Heart right ventricle (tissue), 16 donors: ENCODE measurements at regions of chrX and their contacts with region 1.

Region 1: GRCh38 chrX:40013266-40014195 is 84.2 kb downstream of the BCOR start:
- DNase-seq: peak; percentile 74 to 75
- ATAC-seq: peak; percentile 49 to 78 (median 74)
- H3K4me3 ChIP-seq: peak overlapping the region; percentile 16 to 65 (median 56)
- H3K27ac ChIP-seq: peak overlapping the region; percentile 89 to 98 (median 95)
- H3K4me1 ChIP-seq: peaks cover 0 to 54% (median 26%) of the 10 kb centered on the region in 9 donors
- H3K27me3 ChIP-seq: peaks cover 0 to 78% (median 0%) of the 10 kb centered on the region in 7 donors
- CTCF ChIP-seq: no peak

Region 2: GRCh38 chrX:39814391-39814790 is 199.1 kb before region 1 on chrX:
- intact Hi-C with region 1: loop called in 3 of 10 experiments (anchors 10 kb)
- DNase-seq: no peak
- ATAC-seq: peak in 5 of 8 donors; percentile 38 to 57 (median 41)
- H3K4me3 ChIP-seq: no peak overlapping the region
- H3K27ac ChIP-seq: peak overlapping the region in 7 of 10 donors; percentile 22 to 68 (median 39)
- H3K4me1 ChIP-seq: peaks cover 0 to 17% (median 10%) of the 10 kb centered on the region in 9 donors
- H3K27me3 ChIP-seq: peaks cover 0 to 30% (median 0%) of the 10 kb centered on the region in 7 donors
- CTCF ChIP-seq: peak; percentile 18 to 60 (median 51)

Region 3: DNA sequence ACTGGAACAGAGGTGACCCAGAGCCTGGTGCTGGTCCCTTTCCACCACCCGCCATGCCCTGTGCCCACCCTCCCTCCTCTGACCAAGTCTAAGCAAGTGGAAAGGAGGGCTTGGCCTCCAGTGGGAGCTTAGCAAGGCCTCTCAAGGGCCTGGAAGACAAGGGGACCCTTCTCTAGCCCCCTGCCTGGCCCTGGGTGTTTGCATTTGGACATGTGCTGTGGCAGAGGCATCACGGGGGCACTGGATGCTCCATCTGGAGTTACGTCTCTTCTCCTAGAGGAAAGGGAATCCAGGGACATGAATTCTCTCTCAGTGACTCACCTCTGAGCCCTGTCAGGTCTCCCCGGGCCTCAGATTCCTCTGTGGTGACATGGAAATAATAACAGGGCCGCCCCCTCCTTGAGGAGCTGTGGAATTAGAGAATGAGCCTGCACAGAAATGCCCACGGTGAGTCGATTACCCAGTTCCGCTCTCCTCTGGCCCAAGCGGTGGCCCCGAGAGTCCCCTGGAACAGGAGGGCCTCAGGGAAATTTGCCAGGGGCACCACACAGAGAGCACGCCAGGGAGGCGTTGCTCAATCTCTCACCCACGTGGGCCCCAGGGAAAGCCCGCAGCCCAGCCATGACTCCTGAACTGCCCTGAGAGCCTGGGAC is 105.4 kb before region 1 on chrX:
- intact Hi-C with region 1: loop called in 3 of 10 experiments (anchors 10 kb)
- DNase-seq: peak; percentile 44 to 54
- ATAC-seq: peak; percentile 80 to 94 (median 88)
- H3K4me3 ChIP-seq: no peak overlapping the region
- H3K27ac ChIP-seq: peak overlapping the region in 8 of 10 donors; percentile 25 to 70 (median 34)
- H3K4me1 ChIP-seq: peaks cover 0 to 37% (median 5%) of the 10 kb centered on the region in 9 donors
- H3K27me3 ChIP-seq: peaks cover 0 to 20% (median 0%) of the 10 kb centered on the region in 7 donors
- CTCF ChIP-seq: no peak

Region 4: GRCh38 chrX:39972340-39972739 is 41.2 kb before region 1 on chrX:
- intact Hi-C with region 1: loop called in 1 of 10 experiments (anchors 5 kb)
- DNase-seq: peak in 1 of 2 donors; percentile 13
- ATAC-seq: peak in 5 of 8 donors; percentile 27 to 52 (median 38)
- H3K4me3 ChIP-seq: no peak overlapping the region
- H3K27ac ChIP-seq: peak overlapping the region in 4 of 10 donors; percentile 28 to 62 (median 45)
- H3K4me1 ChIP-seq: peaks cover 0 to 10% (median 0%) of the 10 kb centered on the region in 9 donors
- H3K27me3 ChIP-seq: peaks cover 0 to 26% (median 0%) of the 10 kb centered on the region in 7 donors
- CTCF ChIP-seq: no peak

Region 5: GRCh38 chrX:40108959-40109287 is 95.4 kb after region 1 on chrX:
- intact Hi-C with region 1: loop called in 3 of 10 experiments (anchors 2 to 10 kb)
- DNase-seq: peak; percentile 74 to 84
- ATAC-seq: peak; percentile 60 to 82 (median 68)
- H3K4me3 ChIP-seq: peak overlapping the region; percentile 28 to 75 (median 59)
- H3K27ac ChIP-seq: peak overlapping the region; percentile 84 to 96 (median 93)
- H3K4me1 ChIP-seq: peaks cover 2 to 44% (median 34%) of the 10 kb centered on the region in 9 donors
- H3K27me3 ChIP-seq: peaks cover 0 to 73% (median 0%) of the 10 kb centered on the region in 7 donors
- CTCF ChIP-seq: no peak

Region 6: GRCh38 chrX:40153335-40154249 is 140.1 kb after region 1 on chrX:
- intact Hi-C with region 1: loop called in 6 of 10 experiments (anchors 5 to 10 kb)
- DNase-seq: no peak
- ATAC-seq: peak; percentile 2 to 39 (median 28)
- H3K4me3 ChIP-seq: peak overlapping the region; percentile 32 to 56 (median 53)
- H3K27ac ChIP-seq: peak overlapping the region; percentile 21 to 89 (median 82)
- H3K4me1 ChIP-seq: peaks cover 6 to 66% (median 45%) of the 10 kb centered on the region in 9 donors
- H3K27me3 ChIP-seq: peaks cover 0 to 100% (median 0%) of the 10 kb centered on the region in 7 donors
- CTCF ChIP-seq: peak in 4 of 9 donors; percentile 6 to 41 (median 16)

Region 7: GRCh38 chrX:40266490-40267333 is 253.2 kb after region 1 on chrX:
- intact Hi-C with region 1: loop called in 2 of 10 experiments (anchors 10 kb)
- DNase-seq: peak; percentile 64 to 70
- ATAC-seq: peak; percentile 85 to 95 (median 92)
- H3K4me3 ChIP-seq: peak overlapping the region; percentile 25 to 61 (median 52)
- H3K27ac ChIP-seq: peak overlapping the region in 9 of 10 donors; percentile 65 to 83 (median 77)
- H3K4me1 ChIP-seq: peaks cover 0 to 39% (median 8%) of the 10 kb centered on the region in 9 donors
- H3K27me3 ChIP-seq: peaks cover 0 to 32% (median 0%) of the 10 kb centered on the region in 7 donors
- CTCF ChIP-seq: peak; percentile 38 to 81 (median 63)